ENCODE measurements at regions of chr21 and their contacts with region 1.

Region 1: GRCh38 chr21:43975495-43975993 is 36.6 kb upstream of the TRAPPC10 start:
- DNase-seq: peak; percentile 88
- H3K4me3 Mint-ChIP-seq: no peak overlapping the region
- H3K27ac Mint-ChIP-seq: no peak overlapping the region
- H3K4me1 Mint-ChIP-seq: peaks cover 7% of the 10 kb centered on the region
- H3K27me3 Mint-ChIP-seq: no peaks in the 10 kb centered on the region

Region 2: GRCh38 chr21:43810505-43811261 is 164.9 kb before region 1 on chr21:
- CTCF ChIA-PET with region 1: interaction called, 3 read pairs
- intact Hi-C with region 1: loop called (anchors 1 kb)
- DNase-seq: peak; percentile 95
- H3K4me3 Mint-ChIP-seq: no peak overlapping the region
- H3K27ac Mint-ChIP-seq: no peak overlapping the region
- H3K4me1 Mint-ChIP-seq: peaks cover 7% of the 10 kb centered on the region
- H3K27me3 Mint-ChIP-seq: no peaks in the 10 kb centered on the region

Region 3: DNA sequence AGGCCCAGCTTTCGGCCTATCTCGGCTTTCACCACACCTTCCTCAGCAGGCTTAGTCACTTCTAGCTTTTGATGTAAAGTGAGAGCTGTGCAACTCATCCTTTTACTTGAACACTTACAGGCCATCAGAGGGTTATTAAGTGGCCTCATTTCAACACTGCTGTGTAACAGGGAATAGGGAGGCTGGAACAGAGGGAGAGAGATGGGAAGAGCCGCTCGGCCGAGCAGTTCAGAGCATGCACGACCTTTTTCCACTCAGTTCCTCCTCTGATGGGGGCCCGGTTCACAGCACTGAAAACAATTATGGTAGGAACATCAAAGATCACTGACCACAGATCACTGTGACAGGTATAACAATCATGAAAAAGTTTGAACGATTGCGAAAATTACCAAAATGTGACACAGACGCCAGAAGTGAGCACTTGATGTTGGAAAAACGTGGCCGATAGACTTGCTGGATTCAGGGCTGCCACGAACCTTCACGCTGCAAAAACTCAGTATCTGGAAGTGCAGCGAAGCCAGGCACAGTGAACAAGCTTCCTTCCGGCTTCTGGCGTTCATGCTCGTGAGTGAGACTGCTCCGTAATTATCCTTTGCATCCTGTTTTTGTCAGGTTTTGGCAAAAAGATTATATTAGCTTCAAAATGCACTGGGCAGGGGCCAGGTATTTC is 81.9 kb before region 1 on chr21:
- CTCF ChIA-PET with region 1: no interaction called
- intact Hi-C with region 1: no loop called
- DNase-seq: peak; percentile 62
- H3K4me3 Mint-ChIP-seq: peak overlapping the region; percentile 61
- H3K27ac Mint-ChIP-seq: peak overlapping the region; percentile 69
- H3K4me1 Mint-ChIP-seq: peaks cover 40% of the 10 kb centered on the region
- H3K27me3 Mint-ChIP-seq: no peaks in the 10 kb centered on the region